Activated CD8-positive, alpha-beta T cell treated with anti-CD3 and anti-CD28 coated beads, Interleukin-2, amount 10 ng/mL, durations not matched to agents 7 days and 5 days (primary cell): ENCODE measurements at regions of chr2 and their contacts with region 1.

Region 1: DNA sequence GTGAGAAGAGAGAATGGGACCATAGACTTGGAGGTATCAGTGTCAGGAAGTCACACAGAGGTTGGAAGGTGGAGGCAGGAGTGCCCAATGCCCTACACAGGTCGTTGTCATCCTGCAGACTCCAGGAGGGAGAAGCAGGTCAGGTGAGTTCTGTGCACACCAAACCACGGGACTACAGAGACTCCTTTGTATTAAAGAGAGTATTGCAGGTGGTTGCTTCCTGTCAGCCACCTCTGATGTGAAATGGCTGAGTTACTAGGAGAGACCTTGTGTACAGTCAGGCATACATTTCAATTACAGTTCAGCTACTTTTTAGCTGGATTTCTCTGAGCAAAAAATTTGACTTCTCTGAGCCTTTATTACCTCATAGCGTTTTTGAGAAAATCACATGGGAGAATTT is 51.6 kb downstream of the SPP2 start:
- DNase-seq: peak; percentile 46
- ATAC-seq: peak; percentile 74
- H3K4me3 Mint-ChIP-seq: no peak overlapping the region
- H3K27ac Mint-ChIP-seq: no peak overlapping the region
- H3K4me1 Mint-ChIP-seq: peaks cover 38% of the 10 kb centered on the region
- H3K27me3 Mint-ChIP-seq: peaks cover 5% of the 10 kb centered on the region

Region 2: GRCh38 chr2:233990261-233990798 is 111.8 kb before region 1 on chr2:
- CTCF ChIA-PET with region 1: interaction called, 17 read pairs
- POLR2A ChIA-PET with region 1: no interaction called
- DNase-seq: peak; percentile 91
- ATAC-seq: peak; percentile 91
- H3K4me3 Mint-ChIP-seq: peak overlapping the region; percentile 1
- H3K27ac Mint-ChIP-seq: peak overlapping the region; percentile 39
- H3K4me1 Mint-ChIP-seq: peaks cover 57% of the 10 kb centered on the region
- H3K27me3 Mint-ChIP-seq: no peaks in the 10 kb centered on the region